Activated CD4-positive, alpha-beta T cell treated with anti-CD3 and anti-CD28 coated beads for 36 hours (primary cell): ENCODE measurements at regions of chr1 and their contacts with region 1.

Region 1: GRCh38 chr1:155017041-155017945 is 14.7 kb downstream of the ZBTB7B start:
- DNase-seq: peak; percentile 97
- ATAC-seq: peak; percentile 87
- H3K4me3 Mint-ChIP-seq: peak overlapping the region; percentile 53
- H3K27ac Mint-ChIP-seq: peak overlapping the region; percentile 69
- H3K4me1 Mint-ChIP-seq: peaks cover 69% of the 10 kb centered on the region
- H3K27me3 Mint-ChIP-seq: no peaks in the 10 kb centered on the region

Region 2: GRCh38 chr1:154961497-154962262 is 55.6 kb before region 1 on chr1 and contains the start of gene PYGO2:
- CTCF ChIA-PET with region 1: interaction called, 8 read pairs
- POLR2A ChIA-PET with region 1: no interaction called
- intact Hi-C with region 1: loop called (anchors 1 kb)
- DNase-seq: peak; percentile 90
- ATAC-seq: peak; percentile 81
- H3K4me3 Mint-ChIP-seq: peak within 1 kb of the TSS; percentile 91
- H3K27ac Mint-ChIP-seq: peak within 1 kb of the TSS; percentile 93
- H3K4me1 Mint-ChIP-seq: peaks cover 43% of the 10 kb centered on the region
- H3K27me3 Mint-ChIP-seq: no peaks in the 10 kb centered on the region
- total RNA-seq, gene PYGO2: 24.5 to 25.6 TPM

Region 3: DNA sequence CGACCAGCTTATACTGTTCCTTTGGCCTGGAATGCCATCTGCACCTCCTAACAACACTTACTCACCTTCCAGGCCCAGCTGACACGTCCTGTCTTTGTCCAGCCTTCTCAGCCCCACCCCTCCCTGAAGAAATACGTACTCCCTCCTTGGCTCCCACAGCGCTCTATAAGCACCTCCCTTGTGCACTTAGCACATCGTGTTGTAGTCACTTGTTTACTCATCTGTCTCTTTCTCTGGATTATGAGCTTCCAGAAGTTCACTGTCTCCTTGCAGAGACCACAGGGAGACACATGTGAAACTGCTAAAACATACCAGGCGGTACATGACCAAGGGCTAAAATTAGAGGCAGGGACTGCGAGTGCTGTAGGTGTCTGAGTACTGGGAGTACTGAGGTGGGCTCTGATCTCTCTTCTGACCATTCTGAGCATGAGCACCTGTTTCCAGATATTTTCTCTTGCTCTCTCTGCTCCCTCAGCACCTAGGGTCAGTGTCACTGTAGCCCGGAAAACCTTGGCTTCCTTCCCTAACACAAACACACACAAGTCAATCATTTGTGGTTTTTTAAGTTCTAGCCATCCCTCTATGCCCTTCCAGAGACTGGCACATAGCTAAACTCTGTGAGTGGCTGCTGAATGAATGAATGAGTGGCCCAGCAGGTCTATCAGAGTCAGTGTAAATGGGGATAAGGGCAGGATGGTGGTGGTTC is 21.5 kb after region 1 on chr1:
- CTCF ChIA-PET with region 1: interaction called, 12 read pairs
- POLR2A ChIA-PET with region 1: no interaction called
- intact Hi-C with region 1: no loop called
- DNase-seq: no peak
- ATAC-seq: no peak
- H3K4me3 Mint-ChIP-seq: no peak overlapping the region
- H3K27ac Mint-ChIP-seq: no peak overlapping the region
- H3K4me1 Mint-ChIP-seq: no peaks in the 10 kb centered on the region
- H3K27me3 Mint-ChIP-seq: no peaks in the 10 kb centered on the region